Activated CD4-positive, alpha-beta memory T cell treated with anti-CD3 and anti-CD28 coated beads for 36 hours (primary cell): ENCODE measurements at regions of chr5 and their contacts with region 1.

Region 1: DNA sequence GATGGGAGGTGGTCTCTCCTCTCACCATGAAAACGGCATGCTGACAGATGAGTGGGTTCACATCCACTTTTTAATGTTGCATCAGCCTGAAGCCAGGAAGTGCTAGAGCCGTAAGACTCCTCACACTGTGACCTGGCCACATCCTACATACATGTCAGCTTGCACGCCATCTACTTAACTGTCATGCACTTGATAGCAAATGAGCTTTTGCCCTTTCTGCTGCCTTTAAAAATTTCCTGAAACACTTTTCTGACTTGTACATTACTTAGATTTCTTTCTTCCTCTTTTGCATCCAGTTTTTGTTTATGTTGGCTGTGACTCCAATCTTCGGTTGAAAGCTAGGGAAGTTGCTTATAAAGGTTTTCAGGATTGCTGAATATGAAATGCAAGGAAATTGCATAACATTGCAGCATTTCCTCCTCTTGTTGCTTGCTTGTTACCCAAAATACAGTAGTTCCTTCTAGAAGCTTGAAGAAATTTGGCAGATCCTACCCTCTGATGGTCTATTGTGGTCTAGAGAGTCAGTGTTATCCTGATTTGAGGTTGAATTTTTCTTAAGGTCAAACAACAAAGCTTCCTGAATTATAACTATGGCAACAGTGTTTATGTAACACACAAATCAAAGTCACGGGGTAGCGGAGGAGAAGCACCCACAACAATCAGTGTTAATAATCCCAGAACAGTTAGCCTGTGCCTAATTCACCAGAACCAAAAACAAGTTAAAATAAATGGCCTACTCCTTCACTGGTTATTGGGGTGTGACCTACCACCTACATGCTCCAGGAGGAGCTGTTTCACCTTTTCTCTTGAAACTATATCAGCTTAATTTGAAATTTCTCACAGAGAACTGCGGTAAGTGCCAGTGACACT is 232.5 kb downstream of the ARHGAP26 start:
- DNase-seq: peak; percentile 79
- H3K4me3 Mint-ChIP-seq: peak overlapping the region; percentile 52
- H3K27ac Mint-ChIP-seq: peak overlapping the region; percentile 91
- H3K4me1 Mint-ChIP-seq: peaks cover 56% of the 10 kb centered on the region
- H3K27me3 Mint-ChIP-seq: no peaks in the 10 kb centered on the region

Region 2: DNA sequence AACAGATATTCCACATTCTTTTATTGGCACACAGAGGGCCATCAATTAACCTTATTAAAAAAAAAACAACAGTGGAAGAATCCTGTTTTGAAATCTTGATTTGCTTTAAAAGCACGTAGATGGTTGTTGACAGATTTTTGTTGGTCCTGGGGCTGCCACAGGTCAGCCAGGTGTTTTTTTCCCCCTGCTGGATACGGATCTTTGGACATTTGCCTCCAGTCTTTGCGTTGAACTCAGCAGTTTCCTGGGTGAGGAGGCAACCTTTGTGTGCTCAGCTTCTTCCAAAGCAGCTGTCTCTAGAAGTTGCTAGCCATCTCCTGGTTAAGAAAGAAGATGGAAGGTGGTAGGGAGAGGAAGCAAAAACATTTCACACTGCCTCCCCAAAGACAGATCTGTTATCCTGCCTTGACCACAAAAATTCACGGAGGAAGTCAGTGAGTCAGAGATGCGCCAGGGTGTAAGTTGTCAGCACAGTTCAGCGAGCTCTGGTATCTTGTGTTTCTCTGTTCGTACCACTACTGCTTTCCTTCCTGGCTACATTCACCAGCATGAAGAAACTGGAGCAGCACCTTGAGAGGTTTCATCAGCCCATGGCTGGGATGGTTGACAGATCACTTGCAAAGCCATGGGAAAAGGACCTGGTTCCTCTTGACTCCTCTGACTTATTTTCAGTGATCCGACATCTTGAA is 25.2 kb before region 1 on chr5:
- CTCF ChIA-PET with region 1: interaction called, 3 read pairs
- POLR2A ChIA-PET with region 1: interaction called, 4 read pairs
- intact Hi-C with region 1: loop called (anchors 2 kb)
- DNase-seq: peak; percentile 62
- H3K4me3 Mint-ChIP-seq: peak overlapping the region; percentile 23
- H3K27ac Mint-ChIP-seq: peak overlapping the region; percentile 87
- H3K4me1 Mint-ChIP-seq: peaks cover 62% of the 10 kb centered on the region
- H3K27me3 Mint-ChIP-seq: no peaks in the 10 kb centered on the region

Region 3: GRCh38 chr5:143023411-143024096 is 20.9 kb after region 1 on chr5:
- CTCF ChIA-PET with region 1: interaction called, 11 read pairs
- POLR2A ChIA-PET with region 1: no interaction called
- intact Hi-C with region 1: no loop called
- DNase-seq: peak; percentile 85
- H3K4me3 Mint-ChIP-seq: no peak overlapping the region
- H3K27ac Mint-ChIP-seq: peak overlapping the region; percentile 59
- H3K4me1 Mint-ChIP-seq: peaks cover 53% of the 10 kb centered on the region
- H3K27me3 Mint-ChIP-seq: no peaks in the 10 kb centered on the region

Region 4: GRCh38 chr5:143968011-143968878 is 965.6 kb after region 1 on chr5:
- CTCF ChIA-PET with region 1: interaction called, 4 read pairs
- POLR2A ChIA-PET with region 1: no interaction called
- intact Hi-C with region 1: loop called (anchors 5 kb)
- DNase-seq: no peak
- H3K4me3 Mint-ChIP-seq: no peak overlapping the region
- H3K27ac Mint-ChIP-seq: no peak overlapping the region
- H3K4me1 Mint-ChIP-seq: no peaks in the 10 kb centered on the region
- H3K27me3 Mint-ChIP-seq: peaks cover 15% of the 10 kb centered on the region